ENCODE measurements at regions of chr2 and their contacts with region 1.

Region 1: GRCh38 chr2:37414470-37414949 is 70.1 kb downstream of the QPCT start:
- DNase-seq: peak in 1 of 4 donors; percentile 8
- ATAC-seq: peak; percentile 71
- H3K4me3 ChIP-seq: no peak overlapping the region
- H3K27ac ChIP-seq: no peak overlapping the region
- H3K4me1 ChIP-seq: no peaks in the 10 kb centered on the region
- H3K27me3 ChIP-seq: no peaks in the 10 kb centered on the region
- CTCF ChIP-seq: peak; percentile 59 to 96 (median 92)
- POLR2A ChIP-seq: no peak

Region 2: GRCh38 chr2:37365669-37366068 is 48.8 kb before region 1 on chr2:
- intact Hi-C with region 1: no loop called
- DNase-seq: no peak
- ATAC-seq: no peak
- H3K4me3 ChIP-seq: no peak overlapping the region
- H3K27ac ChIP-seq: no peak overlapping the region
- H3K4me1 ChIP-seq: no peaks in the 10 kb centered on the region
- H3K27me3 ChIP-seq: no peaks in the 10 kb centered on the region
- CTCF ChIP-seq: no peak
- POLR2A ChIP-seq: no peak

Region 3: GRCh38 chr2:37748541-37748940 is 334.0 kb after region 1 on chr2:
- intact Hi-C with region 1: no loop called
- DNase-seq: no peak
- ATAC-seq: no peak
- H3K4me3 ChIP-seq: no peak overlapping the region
- H3K27ac ChIP-seq: no peak overlapping the region
- H3K4me1 ChIP-seq: no peaks in the 10 kb centered on the region
- H3K27me3 ChIP-seq: no peaks in the 10 kb centered on the region
- CTCF ChIP-seq: no peak
- POLR2A ChIP-seq: no peak

Region 4: DNA sequence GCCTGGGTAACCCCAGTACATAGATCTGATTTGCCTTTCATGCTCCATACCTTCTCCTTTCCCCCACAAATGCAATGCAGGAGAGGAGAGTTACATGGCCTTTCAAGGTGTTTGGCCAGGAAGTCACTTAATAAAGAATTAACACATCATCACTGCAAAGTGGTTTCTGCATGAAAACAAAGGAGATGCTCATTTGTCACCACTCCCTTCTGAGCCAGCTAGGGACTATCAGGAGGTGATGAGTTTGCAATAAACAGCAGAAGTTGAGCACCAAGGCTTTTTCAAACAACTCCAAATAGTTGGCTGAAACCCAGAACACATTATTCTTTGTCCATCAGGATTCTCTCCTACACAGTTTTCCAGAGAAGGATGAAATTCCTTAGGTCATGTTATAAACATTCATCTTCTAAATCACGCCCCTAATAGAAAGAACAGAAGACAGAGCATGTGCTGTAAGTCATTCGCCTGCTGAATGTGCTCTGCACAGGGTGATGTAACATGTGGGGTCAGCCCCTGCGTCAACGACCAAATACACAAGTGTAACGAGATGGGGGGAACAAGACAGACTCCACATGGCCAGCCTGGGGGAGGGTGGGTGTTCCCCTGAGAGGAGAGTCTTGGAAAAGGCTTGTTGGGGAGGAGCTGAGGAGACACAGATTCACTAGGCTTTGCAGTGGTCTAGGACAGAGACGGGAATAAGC is 423.3 kb after region 1 on chr2:
- intact Hi-C with region 1: loop called (anchors 5 kb)
- DNase-seq: peak; percentile 22 to 60 (median 42)
- ATAC-seq: peak; percentile 56
- H3K4me3 ChIP-seq: no peak overlapping the region
- H3K27ac ChIP-seq: no peak overlapping the region
- H3K4me1 ChIP-seq: no peaks in the 10 kb centered on the region
- H3K27me3 ChIP-seq: no peaks in the 10 kb centered on the region
- CTCF ChIP-seq: no peak
- POLR2A ChIP-seq: no peak